Activated naive CD4-positive, alpha-beta T cell treated with anti-CD3 and anti-CD28 coated beads for 36 hours (primary cell): ENCODE measurements at regions of chr17 and their contacts with region 1.

Region 1: DNA sequence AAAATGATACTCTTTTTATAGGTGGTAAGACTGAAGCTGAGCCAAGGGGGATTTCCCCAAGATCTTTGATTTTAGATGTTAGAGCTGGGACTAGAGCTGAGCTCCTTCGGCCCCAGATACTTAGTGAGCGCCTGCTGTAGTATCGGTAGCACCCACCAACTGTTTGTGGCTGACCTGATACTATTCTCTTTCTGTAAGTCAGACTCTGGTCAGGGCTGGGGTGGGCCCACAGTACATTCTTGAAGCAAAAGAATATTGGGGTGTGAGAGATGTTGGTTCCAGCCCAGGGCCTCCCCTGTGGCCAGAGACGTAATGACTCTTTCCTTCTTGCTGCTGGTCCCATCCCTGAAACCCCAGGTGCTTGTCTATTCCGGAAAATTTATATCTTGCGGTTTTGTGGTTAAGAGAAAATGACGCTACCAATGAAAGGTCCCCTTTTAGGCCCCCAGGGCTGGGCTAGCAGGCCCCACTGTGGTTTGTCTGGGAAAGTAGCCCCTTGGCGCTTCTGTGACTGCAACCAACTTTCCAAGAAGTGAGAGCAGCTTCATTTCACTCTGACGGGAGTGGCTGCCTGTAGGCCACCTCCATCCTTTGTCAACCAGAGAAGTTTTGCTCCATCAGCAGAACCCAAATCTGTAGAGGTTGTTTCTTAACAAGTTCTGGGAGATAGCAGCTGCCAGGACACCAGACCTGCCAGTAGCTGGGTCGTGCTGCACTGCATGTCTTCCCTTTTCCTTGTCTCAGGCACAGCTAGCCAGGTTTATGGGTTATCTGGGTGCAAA is 86.4 kb upstream of the LGALS9 start:
- DNase-seq: peak; percentile 92
- H3K4me3 Mint-ChIP-seq: peak overlapping the region; percentile 50
- H3K27ac Mint-ChIP-seq: peak overlapping the region; percentile 96
- H3K4me1 Mint-ChIP-seq: peaks cover 76% of the 10 kb centered on the region
- H3K27me3 Mint-ChIP-seq: no peaks in the 10 kb centered on the region

Region 2: GRCh38 chr17:27293898-27294688 is 250.4 kb before region 1 on chr17 and contains the start of gene WSB1:
- CTCF ChIA-PET with region 1: no interaction called
- intact Hi-C with region 1: loop called (anchors 1 kb)
- DNase-seq: peak; percentile 91
- H3K4me3 Mint-ChIP-seq: peak within 1 kb of the TSS; percentile 96
- H3K27ac Mint-ChIP-seq: peak within 1 kb of the TSS; percentile 99
- H3K4me1 Mint-ChIP-seq: peaks cover 36% of the 10 kb centered on the region
- H3K27me3 Mint-ChIP-seq: no peaks in the 10 kb centered on the region
- total RNA-seq, gene WSB1: 112 to 118 TPM

Region 3: DNA sequence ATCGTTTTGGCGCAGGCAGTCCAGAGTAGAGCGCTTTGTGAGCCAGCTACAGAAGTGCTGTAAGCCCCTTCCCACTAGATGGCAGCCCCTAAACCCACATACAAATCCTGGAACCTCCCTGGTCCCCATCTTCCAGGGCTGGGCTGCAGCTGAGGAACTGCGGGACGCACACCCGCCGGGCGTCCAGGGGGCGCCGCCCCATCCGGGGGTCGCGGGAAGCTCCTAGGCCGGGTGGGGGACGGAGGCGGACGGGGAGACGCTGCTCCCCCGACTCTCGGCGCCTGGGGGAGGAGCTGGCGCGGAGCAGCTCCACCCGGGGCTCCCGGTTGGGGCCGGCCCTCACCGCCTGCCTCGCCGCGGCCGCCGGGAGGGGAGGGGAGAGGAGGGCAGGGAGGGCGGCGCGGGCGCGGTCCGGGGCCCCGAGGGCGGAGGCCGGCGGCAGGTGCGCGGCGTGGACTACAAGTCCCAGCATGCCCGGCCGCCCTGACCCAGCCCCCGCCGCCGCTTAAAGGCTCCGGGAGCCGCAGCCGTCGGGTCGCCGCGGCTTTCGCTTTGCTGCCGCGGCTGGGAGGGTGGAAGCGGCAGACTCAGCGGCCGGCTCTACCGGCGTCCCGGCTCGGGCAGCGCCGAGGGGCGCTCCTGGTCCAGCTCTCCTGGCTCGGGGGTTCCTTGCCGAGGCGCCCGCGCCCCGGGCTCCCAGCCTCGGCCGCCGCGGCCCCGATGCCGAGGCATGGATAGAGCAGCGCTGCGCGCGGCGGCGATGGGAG is 88.4 kb before region 1 on chr17 and contains the start of gene KSR1:
- CTCF ChIA-PET with region 1: interaction called, 16 read pairs
- intact Hi-C with region 1: loop called (anchors 1 kb)
- DNase-seq: peak; percentile 86
- H3K4me3 Mint-ChIP-seq: peak within 1 kb of the TSS; percentile 93
- H3K27ac Mint-ChIP-seq: peak within 1 kb of the TSS; percentile 86
- H3K4me1 Mint-ChIP-seq: peaks cover 42% of the 10 kb centered on the region
- H3K27me3 Mint-ChIP-seq: no peaks in the 10 kb centered on the region
- total RNA-seq, gene KSR1: 179 to 189 TPM

Region 4: GRCh38 chr17:27473748-27474609 is 70.6 kb before region 1 on chr17:
- CTCF ChIA-PET with region 1: interaction called, 43 read pairs
- intact Hi-C with region 1: loop called (anchors 1 kb)
- DNase-seq: peak; percentile 94
- H3K4me3 Mint-ChIP-seq: peak overlapping the region; percentile 45
- H3K27ac Mint-ChIP-seq: peak overlapping the region; percentile 97
- H3K4me1 Mint-ChIP-seq: peaks cover 93% of the 10 kb centered on the region
- H3K27me3 Mint-ChIP-seq: no peaks in the 10 kb centered on the region

Region 5: DNA sequence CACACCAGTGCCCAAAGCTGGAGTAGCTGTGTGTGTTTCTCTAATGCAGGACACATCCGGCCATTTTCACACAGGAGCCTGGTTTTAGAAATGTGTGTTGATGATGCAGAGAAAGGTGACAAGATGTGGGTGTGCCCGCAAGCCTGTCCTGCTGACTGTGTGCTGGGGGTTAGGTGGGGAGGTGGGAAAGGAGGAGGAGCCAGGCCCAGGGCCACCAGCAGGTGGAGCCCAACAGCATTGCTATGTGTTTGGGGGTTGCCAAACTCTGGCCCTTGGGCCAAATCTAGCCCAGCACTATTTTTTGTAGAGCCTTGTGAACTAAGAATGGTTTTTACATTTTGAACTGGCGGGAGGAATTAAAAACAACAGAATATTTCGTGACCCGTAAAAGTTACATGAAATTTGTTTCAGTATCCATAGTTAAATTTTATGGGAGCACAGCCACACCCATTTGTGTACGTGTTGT is 24.7 kb after region 1 on chr17:
- CTCF ChIA-PET with region 1: interaction called, 6 read pairs
- intact Hi-C with region 1: loop called (anchors 1 kb)
- DNase-seq: peak; percentile 71
- H3K4me3 Mint-ChIP-seq: no peak overlapping the region
- H3K27ac Mint-ChIP-seq: peak overlapping the region; percentile 47
- H3K4me1 Mint-ChIP-seq: peaks cover 71% of the 10 kb centered on the region
- H3K27me3 Mint-ChIP-seq: no peaks in the 10 kb centered on the region

Region 6: GRCh38 chr17:27620721-27621120 is 76.2 kb after region 1 on chr17:
- CTCF ChIA-PET with region 1: no interaction called
- intact Hi-C with region 1: loop called (anchors 1 kb)
- DNase-seq: peak; percentile 65
- H3K4me3 Mint-ChIP-seq: no peak overlapping the region
- H3K27ac Mint-ChIP-seq: peak overlapping the region; percentile 51
- H3K4me1 Mint-ChIP-seq: peaks cover 36% of the 10 kb centered on the region
- H3K27me3 Mint-ChIP-seq: no peaks in the 10 kb centered on the region